Pancreas (tissue), 10 donors: ENCODE measurements at regions of chr18 and their contacts with region 1.

Region 1: GRCh38 chr18:58768293-58768974 is 96.2 kb upstream of the ZNF532 start:
- DNase-seq: peak; percentile 57 to 92 (median 77)
- ATAC-seq: peak; percentile 91 to 96 (median 96)
- H3K4me3 ChIP-seq: peak overlapping the region in 2 of 4 donors; percentile 17 to 18
- H3K27ac ChIP-seq: no peak overlapping the region
- H3K4me1 ChIP-seq: peaks cover 0 to 2% (median 0%) of the 10 kb centered on the region in 3 donors
- H3K27me3 ChIP-seq: peaks cover 0 to 5% (median 0%) of the 10 kb centered on the region in 4 donors
- CTCF ChIP-seq: peak; percentile 63 to 84 (median 68)

Region 2: DNA sequence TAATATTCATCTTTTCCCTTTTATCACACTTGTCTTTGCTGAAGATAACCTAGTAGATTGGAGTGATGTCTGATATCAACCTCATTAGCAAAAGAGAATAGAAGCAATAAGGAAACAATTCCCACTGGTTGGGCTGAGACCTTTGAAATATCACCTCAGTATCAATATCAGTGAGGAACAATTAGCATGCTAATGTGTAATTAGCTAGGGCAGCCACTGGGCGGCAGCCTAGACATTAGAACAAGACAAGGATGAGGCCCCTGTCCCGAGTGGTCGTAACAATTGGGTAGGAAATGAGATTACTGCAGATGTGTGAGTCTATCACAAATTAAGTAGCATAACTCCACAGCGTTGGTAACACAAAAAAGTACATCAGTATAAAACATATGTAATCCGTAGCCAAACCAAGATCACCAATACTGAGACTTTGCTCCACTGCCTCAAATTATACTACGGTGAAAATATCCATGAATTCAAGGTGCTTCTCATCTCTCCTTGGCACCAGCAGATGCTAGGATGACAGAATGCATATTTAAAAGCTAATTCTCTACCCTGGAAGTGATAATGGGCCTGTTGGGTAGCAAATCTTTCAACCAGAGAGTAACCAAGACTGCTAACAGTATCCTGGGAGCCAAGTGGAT is 238.6 kb before region 1 on chr18:
- intact Hi-C with region 1: loop called in 2 of 3 experiments (anchors 5 to 10 kb)
- DNase-seq: peak in 5 of 6 donors; percentile 30 to 74 (median 47)
- ATAC-seq: peak; percentile 34 to 78 (median 75)
- H3K4me3 ChIP-seq: no peak overlapping the region
- H3K27ac ChIP-seq: no peak overlapping the region
- H3K4me1 ChIP-seq: peaks cover 0 to 15% (median 8%) of the 10 kb centered on the region in 3 donors
- H3K27me3 ChIP-seq: no peaks in the 10 kb centered on the region
- CTCF ChIP-seq: peak; percentile 25 to 54 (median 38)